ENCODE measurements at regions of chr18 and their contacts with region 1.

Region 1: DNA sequence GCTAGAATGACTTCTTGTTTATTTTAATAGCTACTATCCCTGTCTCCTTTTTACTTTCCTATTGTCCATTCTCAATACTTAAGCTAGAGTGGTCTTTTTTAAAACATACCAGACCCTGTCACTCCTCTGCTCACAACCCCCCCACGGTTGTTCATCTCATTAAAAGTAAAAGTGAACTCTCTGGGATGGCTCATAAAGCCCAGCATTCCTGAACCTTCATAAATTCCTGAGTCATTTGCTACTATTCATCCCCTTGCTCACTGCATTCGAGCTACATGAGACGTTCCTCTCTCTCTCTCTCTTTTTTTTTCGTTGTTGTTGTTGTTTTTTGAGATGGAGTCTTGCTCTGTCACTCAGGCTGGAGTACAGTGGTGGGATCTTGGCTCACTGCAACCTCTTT is 148.7 kb upstream of the DSEL start:
- DNase-seq: no peak
- ATAC-seq: no peak
- H3K4me3 Mint-ChIP-seq: no peak overlapping the region
- H3K27ac Mint-ChIP-seq: no peak overlapping the region
- H3K4me1 Mint-ChIP-seq: no peaks in the 10 kb centered on the region
- H3K27me3 Mint-ChIP-seq: no peaks in the 10 kb centered on the region

Region 2: DNA sequence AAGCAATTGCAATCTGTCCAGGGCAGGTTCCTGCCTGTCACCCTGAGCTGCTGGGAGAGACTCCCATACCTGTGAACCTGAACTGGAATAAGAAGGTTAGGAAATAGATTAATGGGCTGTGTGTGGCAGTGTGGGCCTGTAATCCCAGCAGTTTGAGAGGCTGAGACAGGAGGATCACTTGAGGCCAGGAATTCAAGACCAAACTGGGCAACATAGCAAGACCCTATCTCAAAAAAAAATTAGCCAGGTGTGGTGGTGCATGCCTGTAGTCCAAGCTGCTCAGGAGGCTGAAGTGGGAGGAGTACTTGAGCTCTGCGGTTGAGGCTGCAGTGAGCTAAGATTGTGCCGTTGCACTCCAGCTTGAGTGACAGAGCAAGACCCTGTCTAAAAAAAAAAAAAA is 21.0 kb before region 1 on chr18:
- CTCF ChIA-PET with region 1: no interaction called
- POLR2A ChIA-PET with region 1: no interaction called
- intact Hi-C with region 1: loop called in 1 of 2 experiments (anchors 2 kb)
- DNase-seq: no peak
- ATAC-seq: no peak
- H3K4me3 Mint-ChIP-seq: no peak overlapping the region
- H3K27ac Mint-ChIP-seq: no peak overlapping the region
- H3K4me1 Mint-ChIP-seq: no peaks in the 10 kb centered on the region
- H3K27me3 Mint-ChIP-seq: peaks cover 3% of the 10 kb centered on the region

Measured in activated CD4-positive, alpha-beta T cell treated with anti-CD3 and anti-CD28 coated beads for 36 hours (primary cell).